ENCODE measurements at regions of chr1 and their contacts with region 1.

Region 1: DNA sequence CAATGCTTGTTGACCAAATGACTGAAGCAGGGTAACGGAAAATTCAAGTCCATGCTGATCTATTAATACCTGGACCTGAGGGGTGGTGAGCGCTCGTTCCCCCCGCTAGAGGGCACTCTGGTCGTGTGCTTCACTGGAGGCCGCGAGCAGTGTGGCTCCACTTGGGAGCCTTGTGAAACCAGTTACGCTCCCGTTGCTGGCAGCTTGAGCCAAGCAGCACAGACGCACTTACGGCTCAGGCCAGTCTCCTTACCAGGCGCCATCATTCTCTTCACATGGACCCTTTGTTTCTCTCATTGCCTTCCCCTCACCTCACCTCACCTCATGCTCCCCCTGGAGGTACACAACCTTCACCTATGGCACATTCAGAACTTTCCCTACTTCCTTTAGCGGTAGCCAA is 49.7 kb upstream of the TSPAN2 start:
- DNase-seq: peak; percentile 83
- H3K4me3 ChIP-seq: no peak overlapping the region
- H3K27ac ChIP-seq: no peak overlapping the region
- H3K4me1 ChIP-seq: peaks cover 0 to 3% (median 2%) of the 10 kb centered on the region in 4 donors
- H3K27me3 ChIP-seq: no peaks in the 10 kb centered on the region
- CTCF ChIP-seq: peak; percentile 83 to 90 (median 89)
- EP300 ChIP-seq: no peak
- POLR2A ChIP-seq: no peak

Region 2: DNA sequence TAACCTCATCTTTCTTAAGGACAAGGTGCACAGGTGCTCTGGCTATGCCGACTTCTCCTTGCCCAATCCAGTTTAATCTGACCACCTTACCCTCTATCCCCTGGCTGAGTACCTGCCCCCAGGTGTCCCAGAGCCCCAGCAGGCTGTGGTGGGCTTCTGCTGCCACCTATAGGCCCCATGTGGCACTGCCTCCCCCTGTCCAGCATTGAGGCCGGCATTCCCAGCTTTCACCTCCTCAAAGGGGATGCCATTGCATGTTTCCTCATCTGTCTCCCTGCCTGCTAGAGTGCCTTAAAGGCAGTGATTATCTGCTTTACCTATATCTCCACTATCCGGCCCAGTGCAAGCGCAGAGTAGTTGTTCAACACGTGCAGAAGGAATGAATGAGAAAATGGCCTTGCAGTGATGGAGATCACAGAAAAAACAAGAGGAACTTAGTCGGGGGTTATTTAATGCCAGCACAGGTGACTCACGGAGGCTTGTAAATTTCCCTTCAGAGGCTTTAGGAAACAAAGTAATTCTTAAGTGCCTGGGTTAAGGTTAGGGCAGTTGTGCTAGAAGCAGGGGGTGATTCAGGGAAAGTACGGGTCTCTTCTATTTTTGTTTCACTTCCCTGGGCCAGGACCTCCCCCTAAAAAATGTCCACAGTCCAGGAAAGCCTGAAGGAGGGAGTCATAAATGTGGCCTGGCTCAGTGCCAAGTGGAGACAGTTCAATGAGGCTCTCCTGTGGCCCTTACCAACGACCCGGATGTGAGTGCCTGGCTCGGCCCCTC is 330.9 kb after region 1 on chr1:
- in situ Hi-C with region 1: loop called (anchors 5 to 25 kb)
- intact Hi-C with region 1: loop called (anchors 5 kb)
- DNase-seq: peak; percentile 43
- H3K4me3 ChIP-seq: no peak overlapping the region
- H3K27ac ChIP-seq: peak overlapping the region in 1 of 4 donors; percentile 13
- H3K4me1 ChIP-seq: peaks cover 0 to 7% (median 0%) of the 10 kb centered on the region in 4 donors
- H3K27me3 ChIP-seq: no peaks in the 10 kb centered on the region
- CTCF ChIP-seq: peak; percentile 75 to 90 (median 83)
- EP300 ChIP-seq: no peak
- POLR2A ChIP-seq: no peak

Region 3: DNA sequence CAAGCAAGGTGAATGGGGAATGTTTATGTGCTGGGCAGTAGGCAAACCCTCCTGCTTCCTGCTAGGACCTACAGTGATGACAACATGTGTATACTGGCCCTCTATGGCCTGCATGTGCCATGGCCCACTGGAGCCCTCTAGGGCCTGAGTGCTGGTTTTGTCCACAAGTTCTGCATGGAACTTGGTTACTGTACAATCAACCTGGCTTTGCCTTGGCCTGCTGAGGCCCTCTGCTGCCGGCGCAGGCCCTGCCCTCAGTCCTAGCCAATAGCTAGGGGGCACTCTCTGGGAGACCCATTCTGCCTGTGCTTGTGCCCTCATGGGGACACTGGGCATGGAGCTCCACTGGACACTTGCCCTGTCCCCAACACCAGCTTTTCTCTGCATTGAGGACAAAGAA is 337.6 kb after region 1 on chr1:
- in situ Hi-C with region 1: loop called in 3 of 4 experiments (anchors 5 to 25 kb)
- intact Hi-C with region 1: loop called (anchors 5 kb)
- DNase-seq: no peak
- H3K4me3 ChIP-seq: no peak overlapping the region
- H3K27ac ChIP-seq: no peak overlapping the region
- H3K4me1 ChIP-seq: no peaks in the 10 kb centered on the region
- H3K27me3 ChIP-seq: no peaks in the 10 kb centered on the region
- CTCF ChIP-seq: no peak
- EP300 ChIP-seq: no peak
- POLR2A ChIP-seq: no peak

Region 4: GRCh38 chr1:115595279-115596079 is 456.5 kb after region 1 on chr1:
- in situ Hi-C with region 1: loop called (anchors 5 to 25 kb)
- intact Hi-C with region 1: loop called (anchors 5 kb)
- DNase-seq: peak; percentile 79
- H3K4me3 ChIP-seq: no peak overlapping the region
- H3K27ac ChIP-seq: no peak overlapping the region
- H3K4me1 ChIP-seq: no peaks in the 10 kb centered on the region
- H3K27me3 ChIP-seq: no peaks in the 10 kb centered on the region
- CTCF ChIP-seq: peak; percentile 80 to 87 (median 84)
- EP300 ChIP-seq: no peak
- POLR2A ChIP-seq: no peak

Region 5: GRCh38 chr1:115771847-115772457 is 633.0 kb after region 1 on chr1:
- in situ Hi-C with region 1: loop called in 2 of 4 experiments (anchors 25 kb)
- intact Hi-C with region 1: no loop called
- DNase-seq: peak; percentile 39
- H3K4me3 ChIP-seq: peak overlapping the region in 1 of 4 donors; percentile 29
- H3K27ac ChIP-seq: peak overlapping the region in 2 of 4 donors; percentile 22 to 30
- H3K4me1 ChIP-seq: peaks cover 0 to 6% (median 0%) of the 10 kb centered on the region in 4 donors
- H3K27me3 ChIP-seq: no peaks in the 10 kb centered on the region
- CTCF ChIP-seq: peak; percentile 57 to 75 (median 72)
- EP300 ChIP-seq: no peak
- POLR2A ChIP-seq: no peak